Panc1 (cell line): ENCODE measurements at regions of chr10 and their contacts with region 1.

Region 1: DNA sequence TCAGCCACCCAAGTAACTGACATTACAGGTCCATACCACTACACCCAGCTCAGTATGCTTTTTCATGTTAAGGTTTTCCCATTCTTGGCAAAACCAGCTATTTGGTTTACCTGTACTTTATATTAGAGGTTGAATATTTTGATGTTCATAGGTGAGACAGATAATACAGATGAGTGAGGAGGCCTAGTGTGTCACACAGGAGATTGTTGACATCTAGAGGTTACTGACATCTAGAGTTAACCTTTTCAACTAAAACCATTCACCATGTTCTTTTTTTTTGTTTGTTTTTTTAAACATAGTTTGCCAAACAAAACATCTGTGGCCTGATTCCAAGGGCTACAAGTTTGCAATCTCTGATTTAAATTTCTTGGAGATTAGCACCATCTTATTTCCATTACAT is 8.0 kb downstream of the GHITM start:
- DNase-seq: no peak
- ATAC-seq: no peak
- H3K4me3 ChIP-seq: no peak overlapping the region
- H3K27ac ChIP-seq: no peak overlapping the region
- H3K4me1 ChIP-seq: no peaks in the 10 kb centered on the region
- H3K27me3 ChIP-seq: no peaks in the 10 kb centered on the region
- CTCF ChIP-seq: no peak

Region 2: GRCh38 chr10:83983578-83984255 is 163.6 kb before region 1 on chr10:
- CTCF ChIA-PET with region 1: no interaction called
- POLR2A ChIA-PET with region 1: no interaction called
- in situ Hi-C with region 1: no loop called
- intact Hi-C with region 1: no loop called
- DNase-seq: no peak
- ATAC-seq: no peak
- H3K4me3 ChIP-seq: no peak overlapping the region
- H3K27ac ChIP-seq: no peak overlapping the region
- H3K4me1 ChIP-seq: no peaks in the 10 kb centered on the region
- H3K27me3 ChIP-seq: no peaks in the 10 kb centered on the region
- CTCF ChIP-seq: no peak

Region 3: GRCh38 chr10:84205049-84205852 is 57.9 kb after region 1 on chr10:
- CTCF ChIA-PET with region 1: interaction called, 4 read pairs
- POLR2A ChIA-PET with region 1: no interaction called
- in situ Hi-C with region 1: no loop called
- intact Hi-C with region 1: loop called (anchors 5 kb)
- DNase-seq: peak; percentile 55
- ATAC-seq: peak; percentile 67
- H3K4me3 ChIP-seq: no peak overlapping the region
- H3K27ac ChIP-seq: no peak overlapping the region
- H3K4me1 ChIP-seq: no peaks in the 10 kb centered on the region
- H3K27me3 ChIP-seq: peaks cover 20% of the 10 kb centered on the region
- CTCF ChIP-seq: peak; percentile 93